T-cell (primary cell): ENCODE measurements at regions of chr4 and their contacts with region 1.

Region 1: GRCh38 chr4:54941994-54942552 is 183.3 kb downstream of the KDR start:
- DNase-seq: peak in 30 of 35 experiments; percentile 1 to 71 (median 48)
- ATAC-seq: peak; percentile 77 to 82 (median 79)
- H3K4me3 ChIP-seq: no peak overlapping the region
- H3K4me3 Mint-ChIP-seq: peak overlapping the region; percentile 59 to 73 (median 66)
- H3K27ac ChIP-seq: peak overlapping the region; percentile 81
- H3K27ac Mint-ChIP-seq: peak overlapping the region; percentile 92 to 96
- H3K4me1 ChIP-seq: peaks cover 29 to 48% of the 10 kb centered on the region in 2 experiments
- H3K4me1 Mint-ChIP-seq: peaks cover 55 to 67% (median 59%) of the 10 kb centered on the region in 3 donors
- H3K27me3 ChIP-seq: no peaks in the 10 kb centered on the region
- H3K27me3 Mint-ChIP-seq: no peaks in the 10 kb centered on the region

Region 2: GRCh38 chr4:54547299-54548097 is 394.6 kb before region 1 on chr4:
- CTCF ChIA-PET with region 1: no interaction called
- POLR2A ChIA-PET with region 1: no interaction called
- DNase-seq: no peak
- ATAC-seq: no peak
- H3K4me3 ChIP-seq: no peak overlapping the region
- H3K4me3 Mint-ChIP-seq: no peak overlapping the region
- H3K27ac ChIP-seq: no peak overlapping the region
- H3K27ac Mint-ChIP-seq: no peak overlapping the region
- H3K4me1 ChIP-seq: no peaks in the 10 kb centered on the region
- H3K4me1 Mint-ChIP-seq: no peaks in the 10 kb centered on the region
- H3K27me3 ChIP-seq: no peaks in the 10 kb centered on the region
- H3K27me3 Mint-ChIP-seq: peaks cover 0 to 5% of the 10 kb centered on the region in 2 donors

Region 3: GRCh38 chr4:54954656-54955326 is 12.7 kb after region 1 on chr4:
- CTCF ChIA-PET with region 1: interaction called, 4 to 17 read pairs
- POLR2A ChIA-PET with region 1: interaction called, 3 to 10 read pairs
- DNase-seq: no peak
- ATAC-seq: no peak
- H3K4me3 ChIP-seq: no peak overlapping the region
- H3K4me3 Mint-ChIP-seq: no peak overlapping the region
- H3K27ac ChIP-seq: no peak overlapping the region
- H3K27ac Mint-ChIP-seq: no peak overlapping the region
- H3K4me1 ChIP-seq: peaks cover 8 to 12% of the 10 kb centered on the region in 2 experiments
- H3K4me1 Mint-ChIP-seq: peaks cover 8 to 25% (median 18%) of the 10 kb centered on the region in 3 donors
- H3K27me3 ChIP-seq: no peaks in the 10 kb centered on the region
- H3K27me3 Mint-ChIP-seq: no peaks in the 10 kb centered on the region

Region 4: GRCh38 chr4:54961357-54961975 is 19.4 kb after region 1 on chr4:
- CTCF ChIA-PET with region 1: interaction called, 6 to 17 read pairs
- POLR2A ChIA-PET with region 1: interaction called, 3 to 5 read pairs
- DNase-seq: peak in 1 of 35 experiments; percentile 50
- ATAC-seq: peak in 1 of 4 experiments; percentile 44
- H3K4me3 ChIP-seq: no peak overlapping the region
- H3K4me3 Mint-ChIP-seq: no peak overlapping the region
- H3K27ac ChIP-seq: no peak overlapping the region
- H3K27ac Mint-ChIP-seq: no peak overlapping the region
- H3K4me1 ChIP-seq: peaks cover 8 to 18% of the 10 kb centered on the region in 2 experiments
- H3K4me1 Mint-ChIP-seq: peaks cover 17 to 30% (median 20%) of the 10 kb centered on the region in 3 donors
- H3K27me3 ChIP-seq: no peaks in the 10 kb centered on the region
- H3K27me3 Mint-ChIP-seq: no peaks in the 10 kb centered on the region

Region 5: DNA sequence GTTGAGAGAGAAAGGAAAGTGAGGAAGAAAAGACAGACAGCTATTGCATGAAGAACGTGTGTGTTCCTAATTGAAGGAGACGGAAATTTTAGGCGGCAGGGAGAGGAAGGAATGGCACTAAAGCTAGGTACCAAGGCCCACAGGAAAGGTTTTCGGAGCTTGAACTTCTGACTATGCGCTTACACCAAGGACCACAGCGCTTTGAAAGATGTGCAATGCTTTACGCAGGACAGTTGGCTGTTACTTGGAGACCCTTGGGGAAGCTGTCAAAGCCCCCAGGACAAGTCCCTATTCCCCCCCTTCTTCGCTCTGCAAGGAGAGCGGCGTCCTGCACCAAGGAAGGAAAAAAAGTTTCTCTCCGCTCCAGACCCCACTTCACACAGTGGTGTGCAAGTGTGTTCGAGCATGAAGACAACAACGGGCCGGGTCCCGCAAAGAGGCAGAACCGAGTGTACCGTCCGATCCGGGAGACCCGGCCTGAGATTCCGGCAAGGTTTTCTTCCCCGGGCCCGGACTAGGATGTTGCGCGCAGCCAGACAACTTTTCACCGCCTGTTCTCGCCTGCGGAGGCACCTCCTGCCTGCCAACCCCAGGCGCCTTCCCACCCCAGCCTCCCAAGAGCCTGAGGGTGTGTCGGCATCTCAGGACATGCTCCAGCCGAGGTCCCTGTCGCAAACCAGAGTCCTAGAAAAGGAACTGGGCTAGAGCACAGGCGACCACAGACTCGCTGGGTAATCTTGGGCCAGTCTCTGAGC is 182.4 kb after region 1 on chr4:
- CTCF ChIA-PET with region 1: no interaction called
- POLR2A ChIA-PET with region 1: no interaction called
- DNase-seq: no peak
- ATAC-seq: no peak
- H3K4me3 ChIP-seq: no peak overlapping the region
- H3K4me3 Mint-ChIP-seq: peak overlapping the region in 1 of 3 donors; percentile 22
- H3K27ac ChIP-seq: no peak overlapping the region
- H3K27ac Mint-ChIP-seq: no peak overlapping the region
- H3K4me1 ChIP-seq: no peaks in the 10 kb centered on the region
- H3K4me1 Mint-ChIP-seq: peaks cover 0 to 14% (median 5%) of the 10 kb centered on the region in 3 donors
- H3K27me3 ChIP-seq: peaks cover 22 to 23% of the 10 kb centered on the region in 2 experiments
- H3K27me3 Mint-ChIP-seq: peaks cover 34 to 41% of the 10 kb centered on the region in 2 donors